Breast epithelium (tissue), 4 donors: ENCODE measurements at regions of chr17 and their contacts with region 1.

Region 1: GRCh38 chr17:7856883-7857723 is at the start of gene NAA38:
- DNase-seq: peak; percentile 95 to 98
- H3K4me3 ChIP-seq: peak within 1 kb of the TSS; percentile 55 to 87 (median 73)
- H3K27ac ChIP-seq: peak within 1 kb of the TSS; percentile 95 to 97
- H3K4me1 ChIP-seq: peaks cover 5 to 21% of the 10 kb centered on the region in 2 donors
- H3K27me3 ChIP-seq: no peaks in the 10 kb centered on the region
- CTCF ChIP-seq: peak; percentile 18 to 40 (median 19)
- POLR2A ChIP-seq: no peak
- total RNA-seq, gene NAA38: 84.7 to 92.4 (median 89.9) TPM

Region 2: GRCh38 chr17:8041249-8041928 is 184.3 kb after region 1 on chr17:
- intact Hi-C with region 1: loop called (anchors 5 kb)
- DNase-seq: peak in 1 of 2 donors; percentile 60
- H3K4me3 ChIP-seq: peak overlapping the region in 2 of 3 donors; percentile 40 to 58
- H3K27ac ChIP-seq: peak overlapping the region; percentile 83 to 84
- H3K4me1 ChIP-seq: peaks cover 4 to 5% of the 10 kb centered on the region in 2 donors
- H3K27me3 ChIP-seq: peaks cover 0 to 4% of the 10 kb centered on the region in 2 donors
- CTCF ChIP-seq: peak in 2 of 3 donors; percentile 54 to 57
- POLR2A ChIP-seq: no peak